ENCODE measurements at regions of chr21 and their contacts with region 1.

Region 1: DNA sequence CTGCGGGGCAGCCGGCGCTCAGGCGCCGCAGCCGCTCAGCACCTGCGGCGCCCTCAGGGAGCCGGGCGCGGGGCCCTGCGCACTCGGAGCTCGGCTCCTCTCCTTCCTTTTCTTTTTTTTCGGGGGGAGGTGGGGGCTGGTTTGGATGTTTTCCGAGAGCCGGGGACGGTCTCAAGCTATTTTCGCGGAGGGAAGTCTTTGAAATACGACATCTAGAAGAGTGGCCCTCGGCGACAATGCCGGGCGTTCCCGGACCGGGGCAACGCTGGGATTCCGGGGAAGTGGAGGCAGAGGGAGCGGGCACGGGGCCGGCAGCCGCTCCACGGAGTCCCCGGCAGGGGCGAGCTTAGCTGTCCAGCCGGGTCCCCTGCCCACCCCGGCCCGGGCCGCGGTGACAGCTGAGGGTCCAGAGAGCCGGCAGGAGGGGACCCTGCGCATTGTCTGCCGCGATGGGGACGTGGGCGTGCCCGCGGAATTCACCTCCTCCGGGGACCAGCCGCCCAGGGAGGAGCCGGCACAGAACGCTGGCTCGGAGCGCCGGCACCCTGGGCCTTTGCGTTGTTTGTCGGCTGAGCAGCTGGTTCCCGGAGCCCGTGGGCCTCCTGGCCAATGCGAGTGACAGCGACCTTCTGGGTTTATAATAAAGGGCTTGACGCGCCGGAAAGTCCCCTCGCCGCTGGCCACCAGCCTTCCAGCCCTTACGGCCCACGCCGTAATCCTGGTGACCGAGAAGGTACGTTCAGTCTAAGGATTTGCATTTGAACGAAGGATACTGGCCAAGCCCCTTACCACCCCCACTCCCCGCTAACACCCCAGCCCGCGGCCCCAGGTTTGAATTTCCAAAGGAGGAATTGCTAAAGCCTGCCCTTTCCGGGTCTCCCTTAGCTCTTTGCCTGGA is 582 bp downstream of the SLC37A1 start:
- DNase-seq: peak; percentile 41 to 77 (median 52)
- ATAC-seq: peak; percentile 82
- H3K4me3 Mint-ChIP-seq: peak overlapping the region; percentile 77 to 95 (median 90)
- H3K27ac Mint-ChIP-seq: peak overlapping the region; percentile 63 to 94 (median 84)
- H3K4me1 Mint-ChIP-seq: peaks cover 9 to 47% (median 43%) of the 10 kb centered on the region in 4 donors
- H3K27me3 Mint-ChIP-seq: no peaks in the 10 kb centered on the region

Region 2: DNA sequence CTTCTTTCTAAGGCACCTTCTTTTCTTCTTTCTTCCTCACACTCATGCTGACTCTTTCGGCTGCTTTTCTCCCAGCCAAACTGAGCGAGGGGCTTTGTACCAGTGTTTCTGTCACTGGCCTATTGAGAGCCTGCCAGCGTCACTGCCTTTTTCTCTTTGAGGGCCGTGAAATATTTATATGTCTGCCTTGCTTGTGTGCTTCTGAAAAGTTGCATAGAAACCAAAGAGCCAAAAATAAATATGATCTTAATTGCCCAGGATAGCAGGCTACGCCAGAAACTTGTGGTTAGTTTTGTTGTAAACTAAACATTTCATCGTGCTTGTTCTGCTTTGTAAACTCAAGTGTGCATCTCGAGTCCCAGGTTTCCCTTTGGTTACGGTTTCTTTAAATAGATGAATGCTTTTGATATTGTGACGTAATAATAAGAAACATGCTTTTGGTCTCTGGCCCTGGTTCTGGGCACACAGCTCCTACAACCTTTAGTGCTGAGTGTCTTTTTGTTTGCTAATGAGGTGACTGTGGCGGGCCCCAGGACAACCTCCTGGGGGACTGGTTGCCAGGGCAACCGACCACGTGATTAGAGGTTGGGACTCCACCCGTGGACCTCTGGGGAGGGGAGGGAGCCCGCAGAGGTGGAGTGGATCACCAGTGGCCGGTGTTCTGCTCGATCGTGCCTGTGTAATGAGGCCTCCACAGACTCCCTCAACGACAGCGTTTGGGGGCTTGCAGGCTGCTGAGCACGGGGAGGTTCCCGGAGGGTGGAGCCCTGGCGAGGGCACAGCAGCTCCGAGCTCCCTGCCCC is 10.3 kb after region 1 on chr21:
- POLR2A ChIA-PET with region 1: interaction called, 37 read pairs
- DNase-seq: peak; percentile 30 to 87 (median 60)
- ATAC-seq: peak; percentile 59 to 61
- H3K4me3 Mint-ChIP-seq: peak overlapping the region; percentile 56 to 86 (median 70)
- H3K27ac Mint-ChIP-seq: peak overlapping the region; percentile 42 to 94 (median 89)
- H3K4me1 Mint-ChIP-seq: peaks cover 36 to 69% (median 63%) of the 10 kb centered on the region in 4 donors
- H3K27me3 Mint-ChIP-seq: no peaks in the 10 kb centered on the region

Measured in naive thymus-derived CD8-positive, alpha-beta T cell (primary cell).